Endothelial cell of umbilical vein (primary cell): ENCODE measurements at regions of chr22 and their contacts with region 1.

Region 1: DNA sequence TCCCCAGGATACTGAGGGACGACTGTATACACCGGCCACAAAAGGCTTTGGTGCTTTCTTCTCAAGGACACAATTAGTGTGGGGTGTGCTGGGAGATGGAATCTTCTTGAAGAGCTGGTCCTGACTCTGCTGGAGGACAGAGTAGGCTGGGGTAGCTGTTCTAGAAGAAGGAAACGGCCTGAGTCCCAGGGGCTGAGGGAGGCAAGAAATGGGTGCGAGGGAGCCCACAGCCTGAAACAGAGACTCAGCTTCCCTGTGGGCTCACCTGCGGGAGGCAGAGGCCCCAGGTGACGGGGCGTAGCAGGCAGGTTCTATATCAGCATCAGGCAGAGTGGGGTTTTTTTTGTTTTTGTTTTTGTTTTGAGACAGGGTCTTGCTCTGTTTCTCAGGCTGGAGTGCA is 36.6 kb downstream of the PARVG start:
- DNase-seq: no peak
- H3K4me3 ChIP-seq: no peak overlapping the region
- H3K27ac ChIP-seq: no peak overlapping the region
- H3K4me1 ChIP-seq: no peaks in the 10 kb centered on the region
- H3K27me3 ChIP-seq: no peaks in the 10 kb centered on the region
- CTCF ChIP-seq: no peak
- POLR2A ChIP-seq: no peak

Region 2: DNA sequence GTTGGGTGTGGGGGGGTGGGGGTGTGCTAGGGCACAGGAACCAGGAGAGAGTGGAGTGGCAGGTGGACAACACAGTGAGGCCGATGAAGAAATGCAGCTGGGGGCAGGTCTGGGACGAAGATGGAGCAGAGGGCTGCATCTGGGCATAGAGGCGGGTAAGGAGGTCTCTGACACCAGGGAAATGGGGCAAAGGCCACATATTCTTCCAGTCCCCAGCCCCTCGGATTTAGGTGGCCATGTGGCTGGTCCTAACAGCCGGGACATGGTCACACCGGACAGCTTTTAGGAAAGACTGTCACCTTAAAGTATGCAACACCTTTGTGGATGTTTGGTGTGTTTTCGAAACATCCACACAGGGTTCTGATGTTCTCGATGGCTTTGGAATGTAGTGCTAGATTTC is 41.7 kb before region 1 on chr22:
- CTCF ChIA-PET with region 1: no interaction called
- POLR2A ChIA-PET with region 1: interaction called, 10 read pairs
- dilution Hi-C with region 1: no loop called
- intact Hi-C with region 1: no loop called
- DNase-seq: no peak
- H3K4me3 ChIP-seq: no peak overlapping the region
- H3K27ac ChIP-seq: no peak overlapping the region
- H3K4me1 ChIP-seq: no peaks in the 10 kb centered on the region
- H3K27me3 ChIP-seq: peaks cover 13 to 16% of the 10 kb centered on the region in 2 experiments
- CTCF ChIP-seq: no peak
- POLR2A ChIP-seq: no peak

Region 3: DNA sequence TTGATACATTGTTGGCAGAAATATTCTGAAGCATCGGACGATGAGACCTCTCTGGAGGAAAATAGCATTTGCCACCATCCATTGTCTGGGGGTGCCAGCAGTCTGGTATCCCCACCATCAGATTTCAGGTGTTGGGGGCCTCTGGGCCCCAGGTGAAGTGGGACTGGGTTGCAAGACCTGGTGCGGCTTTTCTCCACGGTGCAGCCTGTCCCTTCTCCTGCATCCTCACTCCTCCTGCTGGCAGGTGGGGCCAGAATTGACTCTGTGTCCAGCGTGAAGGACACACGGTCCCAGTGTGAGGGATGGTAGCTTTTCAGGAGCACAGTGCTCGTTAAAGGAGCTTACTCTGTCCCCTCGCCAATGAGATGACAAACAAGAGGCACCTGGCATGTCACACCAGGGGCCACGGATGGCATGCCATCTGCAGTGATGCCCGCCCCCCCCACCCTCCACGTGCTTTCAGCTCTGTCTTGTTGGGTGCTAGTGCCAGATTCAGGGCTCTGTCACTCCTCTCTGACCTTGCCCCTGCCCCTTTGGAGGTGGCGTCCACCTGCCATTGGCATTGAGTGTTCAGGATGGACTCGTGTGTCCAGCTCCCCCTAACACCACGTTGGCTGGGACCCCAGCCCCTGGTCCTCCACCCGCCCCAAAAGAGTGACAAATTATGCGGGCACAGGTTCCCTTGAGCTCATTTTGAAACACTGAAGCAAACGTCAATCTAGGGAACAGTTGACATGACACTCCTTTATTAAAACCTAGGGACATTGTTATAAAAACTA is 25.8 kb after region 1 on chr22:
- CTCF ChIA-PET with region 1: no interaction called
- POLR2A ChIA-PET with region 1: no interaction called
- dilution Hi-C with region 1: no loop called
- intact Hi-C with region 1: no loop called
- DNase-seq: no peak
- H3K4me3 ChIP-seq: no peak overlapping the region
- H3K27ac ChIP-seq: no peak overlapping the region
- H3K4me1 ChIP-seq: no peaks in the 10 kb centered on the region
- H3K27me3 ChIP-seq: no peaks in the 10 kb centered on the region
- CTCF ChIP-seq: no peak
- POLR2A ChIP-seq: no peak